Right ventricle myocardium inferior (tissue), 1 donor: ENCODE measurements at regions of chr1 and their contacts with region 1.

Region 1: GRCh38 chr1:159780583-159781582 is at the start of gene DUSP23:
- DNase-seq: peak; percentile 99
- ATAC-seq: peak; percentile 99
- total RNA-seq, gene DUSP23: 21.3 TPM

Region 2: GRCh38 chr1:159746666-159747065 is 34.2 kb before region 1 on chr1:
- intact Hi-C with region 1: no loop called
- DNase-seq: no peak
- ATAC-seq: no peak

Region 3: DNA sequence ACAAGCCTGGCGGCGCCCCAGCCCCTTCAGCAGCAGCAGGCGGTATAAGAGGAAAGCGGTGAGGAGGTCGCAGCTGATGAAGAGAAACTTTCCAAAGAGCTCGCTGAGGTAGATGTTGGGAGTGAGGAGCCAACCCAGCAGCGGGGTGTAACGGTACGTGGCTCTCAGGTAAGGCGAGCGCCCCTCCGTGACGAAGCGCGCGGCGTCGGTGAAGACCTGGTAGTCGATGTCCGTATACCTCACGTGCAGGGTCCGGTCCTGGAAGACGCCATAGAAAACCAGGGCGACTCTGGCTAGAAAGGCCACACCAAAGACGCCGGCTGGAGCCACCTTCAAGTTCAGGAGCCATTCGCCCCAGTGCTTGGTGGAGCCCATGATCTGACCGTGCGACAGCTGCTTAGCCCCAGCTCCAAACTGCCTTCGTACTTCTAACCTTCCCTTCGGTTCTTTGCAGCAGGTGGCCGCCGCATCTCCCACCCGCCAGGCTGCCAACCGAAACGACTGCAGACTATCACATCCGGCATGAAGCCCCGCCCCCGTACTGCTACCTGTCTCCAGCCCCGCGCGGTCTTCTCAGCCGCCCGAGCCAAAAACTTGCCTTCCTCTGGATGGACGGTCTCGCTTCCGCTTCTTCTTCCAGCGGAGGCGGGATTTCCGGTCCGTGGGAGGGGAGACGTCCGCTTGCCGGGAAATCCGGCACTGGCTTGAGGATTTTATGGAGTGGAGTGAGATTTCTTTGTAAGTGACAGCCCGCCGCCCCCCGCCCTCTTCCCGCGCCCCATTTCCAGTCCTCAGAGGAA is 250.7 kb after region 1 on chr1 and contains the start of gene PIGM:
- intact Hi-C with region 1: loop called (anchors 5 kb)
- DNase-seq: peak; percentile 95
- ATAC-seq: peak; percentile 97
- total RNA-seq, gene PIGM: 2.4 TPM